GM18951 (cell line): ENCODE measurements at regions of chr5 and their contacts with region 1.

Region 1: GRCh38 chr5:26388976-26389375 is 649.4 kb downstream of the CDH9 start:
- POLR2A ChIP-seq: no peak

Region 2: GRCh38 chr5:24823625-24824024 is 1565.4 kb before region 1 on chr5:
- in situ Hi-C with region 1: loop called (anchors 10 kb)
- POLR2A ChIP-seq: no peak

Region 3: GRCh38 chr5:26054594-26054993 is 334.4 kb before region 1 on chr5:
- in situ Hi-C with region 1: no loop called
- POLR2A ChIP-seq: no peak

Region 4: DNA sequence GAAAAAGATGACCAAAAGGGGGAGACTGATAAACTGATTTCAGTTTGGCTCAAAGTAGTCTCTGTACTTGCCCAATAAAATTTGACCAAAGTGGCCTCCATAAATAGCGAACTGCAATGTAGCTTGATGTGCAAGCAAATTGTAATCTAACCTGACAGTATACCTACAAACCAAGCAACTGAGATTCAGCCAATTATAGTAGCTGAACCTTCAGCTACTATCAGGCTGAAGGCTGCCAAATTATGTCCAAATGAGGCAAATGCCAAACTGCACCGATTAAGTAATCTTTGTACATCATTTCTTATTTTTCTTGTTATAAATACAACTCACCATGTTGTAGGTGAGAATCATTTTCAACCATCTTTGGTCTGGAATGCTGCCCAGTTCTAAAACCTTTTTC is 258.8 kb after region 1 on chr5:
- in situ Hi-C with region 1: no loop called
- POLR2A ChIP-seq: no peak